Right ventricle myocardium inferior (tissue), 1 donor: ENCODE measurements at regions of chr15 and their contacts with region 1.

Region 1: GRCh38 chr15:44738340-44738984 is 2.1 kb downstream of the TRIM69 start:
- DNase-seq: no peak
- ATAC-seq: peak; percentile 31

Region 2: DNA sequence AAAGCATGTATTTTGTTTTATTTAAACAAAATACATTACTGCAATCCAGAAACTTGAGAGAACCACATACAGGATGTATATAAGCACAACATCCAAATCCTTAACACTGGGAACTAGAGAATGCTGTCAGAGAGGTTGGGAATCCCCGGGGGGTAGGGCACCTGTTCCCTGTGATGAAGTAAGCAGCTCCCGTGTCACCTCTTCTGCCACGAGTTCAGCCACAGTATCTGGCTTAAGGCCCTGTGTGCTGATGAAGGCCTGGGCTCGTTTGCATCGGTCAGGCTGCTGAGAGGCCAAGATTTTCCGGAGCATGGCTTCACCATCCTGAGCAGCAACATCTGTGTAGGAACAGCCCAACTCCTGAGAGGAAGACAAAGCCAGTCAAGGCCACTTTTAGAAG is 165.1 kb before region 1 on chr15:
- intact Hi-C with region 1: loop called (anchors 1 kb)
- DNase-seq: no peak
- ATAC-seq: no peak